ENCODE measurements at regions of chrX and their contacts with region 1.

Region 1: GRCh38 chrX:132086672-132087071 is 41.1 kb downstream of the FRMD7 start:
- DNase-seq: no peak
- H3K4me3 ChIP-seq: no peak overlapping the region
- H3K27ac ChIP-seq: no peak overlapping the region
- H3K4me1 ChIP-seq: no peaks in the 10 kb centered on the region
- H3K27me3 ChIP-seq: no peaks in the 10 kb centered on the region
- CTCF ChIP-seq: no peak

Region 2: DNA sequence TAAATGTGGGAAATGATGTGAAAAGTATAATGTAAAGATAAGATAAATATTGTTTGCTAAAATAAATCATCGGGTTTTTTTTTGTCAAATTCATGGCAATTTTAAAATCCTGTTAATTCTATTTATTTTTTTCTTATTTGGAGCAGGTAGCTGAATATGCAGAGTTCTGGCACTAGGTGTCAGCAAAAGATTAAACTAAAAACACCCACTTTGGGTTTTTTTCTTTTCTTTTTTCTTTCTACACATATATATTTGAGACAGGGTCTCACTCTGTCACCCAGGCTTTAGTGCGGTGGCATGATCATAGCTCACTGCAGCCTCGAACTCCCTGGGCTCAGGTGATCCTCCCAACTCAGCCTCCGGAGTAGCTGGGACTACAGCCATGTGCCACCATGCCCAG is 139.5 kb after region 1 on chrX:
- intact Hi-C with region 1: loop called (anchors 10 kb)
- DNase-seq: no peak
- H3K4me3 ChIP-seq: no peak overlapping the region
- H3K27ac ChIP-seq: no peak overlapping the region
- H3K4me1 ChIP-seq: no peaks in the 10 kb centered on the region
- H3K27me3 ChIP-seq: no peaks in the 10 kb centered on the region
- CTCF ChIP-seq: peak; percentile 13